ENCODE measurements at regions of chr10 and their contacts with region 1.

Region 1: DNA sequence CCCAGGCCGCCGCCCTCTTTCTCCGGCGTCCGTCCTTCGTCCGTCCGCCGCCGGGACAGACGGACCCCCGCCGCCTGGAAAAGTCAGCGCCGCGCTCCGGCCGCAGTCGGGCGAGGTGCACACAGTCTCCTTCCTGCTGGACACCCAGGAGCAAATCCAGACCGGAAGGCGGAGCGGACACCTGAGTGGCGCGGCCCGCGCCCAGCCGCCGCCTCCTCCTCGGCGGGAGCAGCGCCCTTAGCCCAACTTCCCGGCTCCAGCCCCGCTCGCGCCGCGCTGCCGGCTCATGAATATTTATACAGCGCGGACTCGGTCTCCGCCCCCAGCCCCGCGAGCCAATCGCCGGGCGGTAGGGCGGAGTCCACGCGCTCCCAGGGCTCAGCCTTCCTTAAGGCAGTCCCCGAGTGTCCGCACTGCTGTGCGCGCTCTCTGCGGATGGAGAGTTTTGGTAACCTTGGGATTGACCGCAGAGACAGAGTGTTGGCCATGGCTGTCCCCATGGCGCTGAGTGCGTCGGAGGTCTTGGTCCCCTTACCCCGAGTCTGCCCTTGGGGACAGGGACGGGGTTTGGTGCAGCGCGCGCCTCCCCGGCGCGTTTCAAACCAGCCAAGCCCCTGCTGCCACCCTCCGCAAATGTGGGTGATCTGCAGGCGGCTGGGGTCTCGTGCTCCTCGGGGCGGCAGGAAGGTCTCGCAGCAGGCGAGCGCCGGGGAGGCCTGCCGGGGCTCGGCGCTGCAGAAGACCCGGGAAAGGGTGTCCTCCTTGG is at the start of gene FZD8:
- DNase-seq: peak; percentile 96
- H3K4me3 ChIP-seq: peak within 1 kb of the TSS; percentile 66 to 97 (median 78)
- H3K27ac ChIP-seq: peak within 1 kb of the TSS; percentile 89 to 98 (median 92)
- H3K4me1 ChIP-seq: peaks cover 0 to 43% (median 34%) of the 10 kb centered on the region in 4 donors
- H3K27me3 ChIP-seq: no peaks in the 10 kb centered on the region
- CTCF ChIP-seq: peak in 1 of 4 experiments; percentile 24
- EP300 ChIP-seq: no peak
- POLR2A ChIP-seq: peak; percentile 92 to 93
- total RNA-seq, gene FZD8: 6.6 to 15.8 (median 11.7) TPM

Region 2: GRCh38 chr10:35585903-35586535 is 56.2 kb before region 1 on chr10:
- intact Hi-C with region 1: no loop called
- DNase-seq: no peak
- H3K4me3 ChIP-seq: no peak overlapping the region
- H3K27ac ChIP-seq: no peak overlapping the region
- H3K4me1 ChIP-seq: no peaks in the 10 kb centered on the region
- H3K27me3 ChIP-seq: no peaks in the 10 kb centered on the region
- CTCF ChIP-seq: no peak
- EP300 ChIP-seq: no peak
- POLR2A ChIP-seq: no peak

Region 3: DNA sequence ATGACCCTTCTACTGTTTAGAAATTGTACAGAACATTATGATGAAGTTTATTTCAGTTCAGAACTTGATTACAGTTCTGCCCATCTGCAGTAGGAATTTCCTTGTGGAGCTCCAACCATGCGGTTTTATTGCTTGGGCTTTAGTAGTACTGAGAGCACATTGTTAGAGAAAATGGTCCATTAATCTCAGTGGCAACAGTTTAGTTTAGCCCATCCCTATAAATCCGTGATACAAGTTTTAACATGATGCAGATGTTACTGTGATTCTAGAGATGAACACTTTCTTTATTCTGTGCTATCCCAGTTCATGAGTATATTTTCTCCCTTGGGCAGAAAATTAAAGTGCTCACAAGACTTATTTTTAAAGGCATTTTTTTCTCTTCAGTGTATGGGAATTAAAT is 84.6 kb after region 1 on chr10:
- intact Hi-C with region 1: loop called (anchors 2 kb)
- DNase-seq: no peak
- H3K4me3 ChIP-seq: no peak overlapping the region
- H3K27ac ChIP-seq: peak overlapping the region in 3 of 4 donors; percentile 65 to 75 (median 72)
- H3K4me1 ChIP-seq: peaks cover 0 to 27% (median 24%) of the 10 kb centered on the region in 4 donors
- H3K27me3 ChIP-seq: no peaks in the 10 kb centered on the region
- CTCF ChIP-seq: no peak
- EP300 ChIP-seq: peak in 3 of 4 donors; percentile 26 to 78 (median 38)
- POLR2A ChIP-seq: no peak

Region 4: GRCh38 chr10:35822316-35822715 is 180.1 kb after region 1 on chr10:
- intact Hi-C with region 1: loop called (anchors 2 kb)
- DNase-seq: peak; percentile 95
- H3K4me3 ChIP-seq: no peak overlapping the region
- H3K27ac ChIP-seq: peak overlapping the region in 3 of 4 donors; percentile 33 to 63 (median 54)
- H3K4me1 ChIP-seq: peaks cover 0 to 21% (median 19%) of the 10 kb centered on the region in 4 donors
- H3K27me3 ChIP-seq: no peaks in the 10 kb centered on the region
- CTCF ChIP-seq: peak; percentile 33 to 44 (median 43)
- EP300 ChIP-seq: no peak
- POLR2A ChIP-seq: no peak

Region 5: GRCh38 chr10:35889971-35890677 is 247.9 kb after region 1 on chr10:
- intact Hi-C with region 1: loop called (anchors 2 kb)
- DNase-seq: peak; percentile 71
- H3K4me3 ChIP-seq: no peak overlapping the region
- H3K27ac ChIP-seq: peak overlapping the region in 3 of 4 donors; percentile 73 to 76 (median 73)
- H3K4me1 ChIP-seq: peaks cover 0 to 29% (median 26%) of the 10 kb centered on the region in 4 donors
- H3K27me3 ChIP-seq: no peaks in the 10 kb centered on the region
- CTCF ChIP-seq: no peak
- EP300 ChIP-seq: peak in 2 of 4 donors; percentile 17 to 47
- POLR2A ChIP-seq: no peak

Region 6: GRCh38 chr10:35912615-35913569 is 270.7 kb after region 1 on chr10:
- intact Hi-C with region 1: loop called (anchors 5 kb)
- DNase-seq: no peak
- H3K4me3 ChIP-seq: no peak overlapping the region
- H3K27ac ChIP-seq: peak overlapping the region in 1 of 4 donors; percentile 11
- H3K4me1 ChIP-seq: peaks cover 0 to 14% (median 12%) of the 10 kb centered on the region in 4 donors
- H3K27me3 ChIP-seq: no peaks in the 10 kb centered on the region
- CTCF ChIP-seq: no peak
- EP300 ChIP-seq: no peak
- POLR2A ChIP-seq: no peak

Region 7: DNA sequence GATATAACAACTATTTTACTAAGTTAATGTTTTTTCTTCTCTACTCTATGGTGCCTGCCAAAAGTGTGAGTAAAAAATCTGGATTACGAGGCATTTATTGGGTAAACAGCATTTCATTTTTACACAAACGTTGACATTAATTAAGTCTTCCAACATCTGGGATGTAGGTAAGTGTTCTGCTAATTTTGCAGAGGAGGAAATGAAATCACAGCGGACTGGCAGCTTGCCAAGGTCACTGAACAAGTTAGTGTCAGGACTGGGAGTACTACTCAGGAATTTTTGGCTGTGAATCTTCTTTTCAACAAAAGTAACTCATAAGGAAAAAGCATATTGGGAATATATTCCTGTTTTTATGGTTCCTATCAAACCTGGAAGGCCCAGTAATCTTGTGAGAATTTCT is 612.0 kb after region 1 on chr10:
- intact Hi-C with region 1: loop called (anchors 10 kb)
- DNase-seq: peak; percentile 91
- H3K4me3 ChIP-seq: no peak overlapping the region
- H3K27ac ChIP-seq: no peak overlapping the region
- H3K4me1 ChIP-seq: peaks cover 0 to 15% (median 7%) of the 10 kb centered on the region in 4 donors
- H3K27me3 ChIP-seq: no peaks in the 10 kb centered on the region
- CTCF ChIP-seq: no peak
- EP300 ChIP-seq: peak in 1 of 4 donors; percentile 5
- POLR2A ChIP-seq: no peak